Activated CD4-positive, alpha-beta T cell treated with anti-CD3 and anti-CD28 coated beads for 36 hours (primary cell): ENCODE measurements at regions of chr10 and their contacts with region 1.

Region 1: GRCh38 chr10:119686439-119687191 is 35.4 kb downstream of the BAG3 start:
- DNase-seq: peak; percentile 92
- ATAC-seq: peak; percentile 86
- H3K4me3 Mint-ChIP-seq: peak overlapping the region; percentile 46
- H3K27ac Mint-ChIP-seq: peak overlapping the region; percentile 75
- H3K4me1 Mint-ChIP-seq: peaks cover 24% of the 10 kb centered on the region
- H3K27me3 Mint-ChIP-seq: no peaks in the 10 kb centered on the region

Region 2: DNA sequence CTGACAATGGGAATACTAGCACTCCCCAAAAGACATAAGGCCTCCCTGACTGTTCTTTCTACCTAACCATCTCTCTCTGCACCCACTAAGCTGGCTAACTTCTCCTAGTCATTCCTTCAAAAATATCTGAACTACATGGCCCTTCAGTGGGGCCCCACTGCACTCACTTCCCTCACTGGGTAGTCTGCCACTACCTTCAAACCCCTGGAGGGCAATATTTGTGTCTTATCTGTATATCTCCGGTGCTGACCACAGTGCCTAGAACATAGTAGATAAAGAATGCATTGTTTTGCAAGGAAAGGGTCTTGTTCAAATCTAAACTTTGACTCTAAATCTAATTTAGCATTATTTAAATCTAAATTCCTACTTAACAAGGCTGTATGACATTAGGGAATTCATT is 976.1 kb before region 1 on chr10:
- CTCF ChIA-PET with region 1: no interaction called
- POLR2A ChIA-PET with region 1: no interaction called
- intact Hi-C with region 1: no loop called
- DNase-seq: no peak
- ATAC-seq: no peak
- H3K4me3 Mint-ChIP-seq: no peak overlapping the region
- H3K27ac Mint-ChIP-seq: no peak overlapping the region
- H3K4me1 Mint-ChIP-seq: peaks cover 6% of the 10 kb centered on the region
- H3K27me3 Mint-ChIP-seq: no peaks in the 10 kb centered on the region

Region 3: DNA sequence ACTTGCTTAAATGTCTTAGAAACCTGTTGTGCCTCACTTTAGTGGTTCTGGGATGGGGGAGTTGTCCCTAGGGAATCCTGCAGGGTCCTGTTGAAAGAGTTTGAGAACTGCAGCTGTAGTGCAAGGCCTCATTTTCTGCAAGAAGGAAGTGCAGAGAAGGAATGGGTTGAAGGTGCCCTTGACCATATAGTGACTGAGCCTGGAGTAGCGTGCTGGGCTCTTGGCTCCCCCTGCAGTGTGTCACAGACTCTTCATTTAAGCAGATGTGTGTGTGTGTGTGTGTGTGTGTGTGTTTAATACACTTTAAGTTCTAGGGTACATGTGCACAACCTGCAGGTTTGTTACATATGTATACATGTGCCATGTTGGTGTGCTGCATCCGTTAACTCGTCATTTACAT is 387.1 kb before region 1 on chr10:
- CTCF ChIA-PET with region 1: no interaction called
- POLR2A ChIA-PET with region 1: no interaction called
- intact Hi-C with region 1: no loop called
- DNase-seq: no peak
- ATAC-seq: peak; percentile 25
- H3K4me3 Mint-ChIP-seq: no peak overlapping the region
- H3K27ac Mint-ChIP-seq: peak overlapping the region; percentile 68
- H3K4me1 Mint-ChIP-seq: peaks cover 59% of the 10 kb centered on the region
- H3K27me3 Mint-ChIP-seq: no peaks in the 10 kb centered on the region

Region 4: GRCh38 chr10:119650692-119651513 is 35.7 kb before region 1 on chr10 and contains the start of gene BAG3:
- CTCF ChIA-PET with region 1: interaction called, 4 read pairs
- POLR2A ChIA-PET with region 1: no interaction called
- intact Hi-C with region 1: loop called in 1 of 2 experiments (anchors 5 kb)
- DNase-seq: peak; percentile 91
- ATAC-seq: peak; percentile 48
- H3K4me3 Mint-ChIP-seq: peak within 1 kb of the TSS; percentile 84
- H3K27ac Mint-ChIP-seq: peak within 1 kb of the TSS; percentile 95
- H3K4me1 Mint-ChIP-seq: peaks cover 39% of the 10 kb centered on the region
- H3K27me3 Mint-ChIP-seq: no peaks in the 10 kb centered on the region
- total RNA-seq, gene BAG3: 23.8 to 30.7 TPM

Region 5: GRCh38 chr10:119705434-119705831 is 18.8 kb after region 1 on chr10:
- CTCF ChIA-PET with region 1: interaction called, 19 read pairs
- POLR2A ChIA-PET with region 1: interaction called, 4 read pairs
- intact Hi-C with region 1: loop called (anchors 1 kb)
- DNase-seq: peak; percentile 51
- ATAC-seq: peak; percentile 28
- H3K4me3 Mint-ChIP-seq: peak overlapping the region; percentile 41
- H3K27ac Mint-ChIP-seq: peak overlapping the region; percentile 96
- H3K4me1 Mint-ChIP-seq: peaks cover 82% of the 10 kb centered on the region
- H3K27me3 Mint-ChIP-seq: no peaks in the 10 kb centered on the region

Region 6: DNA sequence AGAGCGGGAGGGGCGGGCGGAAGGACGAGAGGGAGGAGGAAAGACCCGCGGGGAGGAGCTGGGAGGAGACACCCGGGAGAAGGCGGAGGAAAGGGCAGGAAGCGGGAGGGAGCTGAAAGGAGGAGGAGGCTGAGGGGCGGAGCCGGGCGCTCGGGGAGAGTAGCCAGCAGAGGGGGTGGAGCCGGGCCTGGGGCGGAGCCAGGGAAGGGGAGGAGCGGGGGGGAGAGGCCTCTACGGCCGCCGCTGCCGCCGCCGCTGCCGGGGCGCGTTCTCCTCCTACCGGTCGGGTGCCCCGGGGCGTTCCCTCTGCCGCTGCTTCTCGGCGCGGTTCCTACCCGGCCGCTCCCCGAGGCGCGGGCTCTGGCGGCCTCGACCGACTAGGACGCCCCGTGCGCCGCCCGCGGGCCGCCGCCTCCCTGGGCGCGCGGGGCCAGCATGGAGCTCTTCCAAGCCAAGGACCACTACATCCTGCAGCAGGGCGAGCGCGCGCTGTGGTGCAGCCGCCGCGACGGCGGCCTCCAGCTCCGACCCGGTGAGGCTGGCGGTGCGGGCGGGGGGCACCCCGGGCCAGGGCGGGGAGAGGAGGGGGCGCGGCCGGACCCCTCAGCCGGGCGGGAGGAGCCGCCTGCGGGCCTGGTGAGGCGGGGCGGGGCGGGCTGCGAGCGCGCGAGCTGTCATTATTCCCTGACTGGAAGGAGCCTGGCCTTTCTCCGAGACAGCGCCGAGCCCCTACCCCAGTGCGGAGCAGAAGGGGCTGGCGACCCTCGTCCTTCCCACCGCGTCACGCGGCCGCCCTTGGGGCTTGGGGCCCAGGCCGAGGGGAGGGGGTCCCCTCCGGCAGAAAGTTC is 39.4 kb after region 1 on chr10 and contains the start of gene INPP5F:
- CTCF ChIA-PET with region 1: interaction called, 19 read pairs
- POLR2A ChIA-PET with region 1: interaction called, 3 read pairs
- intact Hi-C with region 1: loop called (anchors 1 kb)
- DNase-seq: peak; percentile 100
- ATAC-seq: peak; percentile 95
- H3K4me3 Mint-ChIP-seq: peak within 1 kb of the TSS; percentile 86
- H3K27ac Mint-ChIP-seq: peak within 1 kb of the TSS; percentile 73
- H3K4me1 Mint-ChIP-seq: peaks cover 47% of the 10 kb centered on the region
- H3K27me3 Mint-ChIP-seq: no peaks in the 10 kb centered on the region
- total RNA-seq, gene INPP5F: 10.9 to 12.6 TPM

Region 7: GRCh38 chr10:119834188-119834587 is 147.6 kb after region 1 on chr10:
- CTCF ChIA-PET with region 1: interaction called, 5 read pairs
- POLR2A ChIA-PET with region 1: no interaction called
- intact Hi-C with region 1: loop called (anchors 1 to 2 kb)
- DNase-seq: peak; percentile 35
- ATAC-seq: peak; percentile 80
- H3K4me3 Mint-ChIP-seq: no peak overlapping the region
- H3K27ac Mint-ChIP-seq: peak overlapping the region; percentile 83
- H3K4me1 Mint-ChIP-seq: peaks cover 38% of the 10 kb centered on the region
- H3K27me3 Mint-ChIP-seq: no peaks in the 10 kb centered on the region

Region 8: DNA sequence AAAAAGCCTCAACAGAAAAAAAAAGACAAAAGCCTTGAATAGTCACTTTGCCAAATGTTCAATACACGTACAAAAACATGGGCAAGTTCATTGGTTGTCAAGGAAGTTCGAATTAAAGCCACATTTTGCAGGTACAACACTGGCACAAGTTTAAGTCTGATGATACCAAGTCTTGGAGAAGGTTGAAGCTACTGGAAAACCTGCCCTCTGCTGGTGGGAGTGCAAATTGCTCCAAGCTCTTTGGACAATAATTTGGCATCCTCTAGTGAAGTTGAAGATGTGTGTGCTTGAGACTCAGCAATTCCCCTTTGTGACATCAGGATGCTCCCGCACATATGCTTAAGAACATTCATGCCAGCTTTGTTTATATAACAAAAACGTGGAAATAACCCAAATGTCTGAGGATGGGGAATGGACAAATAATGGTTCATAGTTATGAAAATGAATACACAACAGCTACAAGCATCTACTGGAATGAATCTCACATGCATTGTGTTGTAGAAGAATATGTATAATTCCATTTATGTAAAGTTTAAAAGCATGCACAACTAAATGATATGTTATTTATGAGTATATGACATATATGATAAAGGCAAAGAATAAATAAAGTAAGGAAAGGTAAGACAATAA is 650.4 kb after region 1 on chr10:
- CTCF ChIA-PET with region 1: interaction called, 3 read pairs
- POLR2A ChIA-PET with region 1: no interaction called
- intact Hi-C with region 1: loop called in 1 of 2 experiments (anchors 1 kb)
- DNase-seq: peak; percentile 75
- ATAC-seq: no peak
- H3K4me3 Mint-ChIP-seq: no peak overlapping the region
- H3K27ac Mint-ChIP-seq: no peak overlapping the region
- H3K4me1 Mint-ChIP-seq: no peaks in the 10 kb centered on the region
- H3K27me3 Mint-ChIP-seq: peaks cover 11% of the 10 kb centered on the region